BJ (cell line): ENCODE measurements at regions of chr16 and their contacts with region 1.

Region 1: DNA sequence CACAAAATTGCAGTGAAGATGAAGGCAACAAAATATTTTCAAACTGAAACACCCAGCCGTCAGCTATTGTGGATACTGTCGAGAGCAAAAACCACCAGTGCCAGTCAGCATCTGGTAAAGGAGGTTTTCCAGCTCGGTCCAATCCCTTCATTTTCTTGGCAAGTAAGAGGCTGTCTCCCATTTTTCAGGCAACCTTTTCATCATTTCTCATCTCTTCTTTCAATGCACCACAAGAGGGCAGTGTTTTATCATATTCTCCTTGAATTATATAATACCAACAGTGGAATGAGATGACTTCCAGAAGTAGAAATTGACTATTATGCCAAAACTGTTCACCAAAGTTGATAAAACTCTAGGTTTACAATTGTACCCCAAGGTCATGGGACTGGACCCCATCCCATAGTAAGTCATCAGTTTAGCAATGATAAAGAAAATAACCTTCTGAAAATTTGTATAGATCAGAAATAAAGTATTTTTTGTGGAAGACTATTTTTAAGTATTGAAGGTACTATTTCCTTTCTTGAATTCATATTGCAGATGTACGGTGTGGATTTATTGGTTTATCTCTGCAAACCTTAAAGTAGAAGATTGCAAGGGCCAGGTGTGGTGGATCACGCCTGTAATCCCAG is 16.8 kb downstream of the NQO1 start:
- DNase-seq: peak; percentile 25
- H3K4me3 ChIP-seq: no peak overlapping the region
- H3K27me3 ChIP-seq: no peaks in the 10 kb centered on the region
- CTCF ChIP-seq: peak; percentile 53

Region 2: DNA sequence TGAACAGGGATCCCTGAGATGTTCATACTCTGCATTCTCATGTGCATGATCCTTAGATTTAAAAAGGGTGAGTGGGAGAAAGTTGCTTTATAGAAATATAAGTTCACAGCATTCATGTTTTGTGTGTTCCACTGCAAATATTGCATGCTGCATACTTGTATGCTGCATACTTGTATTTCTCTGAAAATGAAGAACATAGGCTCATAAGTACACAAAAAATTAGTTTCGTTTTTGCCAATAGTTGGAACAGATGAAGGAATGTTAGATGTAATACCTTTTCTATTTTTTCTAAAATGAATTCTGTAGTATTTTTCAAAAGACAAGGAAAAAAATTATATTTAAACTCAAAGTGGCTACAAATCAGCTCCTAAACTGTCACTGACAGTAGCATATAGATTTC is 64.8 kb before region 1 on chr16:
- CTCF ChIA-PET with region 1: no interaction called
- POLR2A ChIA-PET with region 1: no interaction called
- DNase-seq: no peak
- H3K4me3 ChIP-seq: no peak overlapping the region
- H3K27me3 ChIP-seq: no peaks in the 10 kb centered on the region
- CTCF ChIP-seq: no peak

Region 3: DNA sequence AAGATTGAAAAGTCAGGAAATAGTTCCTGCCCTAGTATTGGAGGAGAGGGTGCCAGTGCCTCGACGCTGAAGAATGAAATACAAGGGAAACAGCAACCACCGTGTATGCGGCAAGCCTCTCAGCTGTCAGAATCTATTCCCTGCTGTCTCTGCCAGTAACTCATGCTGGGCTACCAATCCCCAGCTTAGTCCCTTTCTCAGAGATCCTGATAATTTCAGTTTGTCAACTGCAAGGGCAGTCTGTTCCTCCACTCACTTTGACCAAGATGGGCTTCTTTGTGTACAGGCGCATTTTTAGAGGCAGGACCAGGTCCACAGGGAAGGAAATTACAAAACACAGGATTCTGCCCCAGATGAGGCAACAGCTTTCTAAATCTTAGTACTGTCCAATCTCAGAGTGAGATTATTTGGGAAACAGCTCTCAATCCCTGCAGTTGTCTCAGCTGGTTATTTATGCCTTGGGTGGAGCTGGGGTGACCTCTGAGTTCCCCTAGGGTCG is 15.5 kb after region 1 on chr16:
- CTCF ChIA-PET with region 1: interaction called, 11 read pairs
- POLR2A ChIA-PET with region 1: no interaction called
- DNase-seq: no peak
- H3K4me3 ChIP-seq: peak overlapping the region; percentile 51
- H3K27me3 ChIP-seq: no peaks in the 10 kb centered on the region
- CTCF ChIP-seq: no peak

Region 4: GRCh38 chr16:69787883-69788282 is 78.3 kb after region 1 on chr16:
- CTCF ChIA-PET with region 1: no interaction called
- POLR2A ChIA-PET with region 1: no interaction called
- DNase-seq: no peak
- H3K4me3 ChIP-seq: no peak overlapping the region
- H3K27me3 ChIP-seq: no peaks in the 10 kb centered on the region
- CTCF ChIP-seq: no peak

Region 5: GRCh38 chr16:69848637-69849545 is 139.3 kb after region 1 on chr16:
- CTCF ChIA-PET with region 1: no interaction called
- POLR2A ChIA-PET with region 1: no interaction called
- DNase-seq: peak; percentile 76
- H3K4me3 ChIP-seq: peak overlapping the region; percentile 4; the same call in 1 of the 2 replicates
- H3K27me3 ChIP-seq: no peaks in the 10 kb centered on the region
- CTCF ChIP-seq: peak; percentile 28; the same call in 1 of the 2 replicates

Region 6: DNA sequence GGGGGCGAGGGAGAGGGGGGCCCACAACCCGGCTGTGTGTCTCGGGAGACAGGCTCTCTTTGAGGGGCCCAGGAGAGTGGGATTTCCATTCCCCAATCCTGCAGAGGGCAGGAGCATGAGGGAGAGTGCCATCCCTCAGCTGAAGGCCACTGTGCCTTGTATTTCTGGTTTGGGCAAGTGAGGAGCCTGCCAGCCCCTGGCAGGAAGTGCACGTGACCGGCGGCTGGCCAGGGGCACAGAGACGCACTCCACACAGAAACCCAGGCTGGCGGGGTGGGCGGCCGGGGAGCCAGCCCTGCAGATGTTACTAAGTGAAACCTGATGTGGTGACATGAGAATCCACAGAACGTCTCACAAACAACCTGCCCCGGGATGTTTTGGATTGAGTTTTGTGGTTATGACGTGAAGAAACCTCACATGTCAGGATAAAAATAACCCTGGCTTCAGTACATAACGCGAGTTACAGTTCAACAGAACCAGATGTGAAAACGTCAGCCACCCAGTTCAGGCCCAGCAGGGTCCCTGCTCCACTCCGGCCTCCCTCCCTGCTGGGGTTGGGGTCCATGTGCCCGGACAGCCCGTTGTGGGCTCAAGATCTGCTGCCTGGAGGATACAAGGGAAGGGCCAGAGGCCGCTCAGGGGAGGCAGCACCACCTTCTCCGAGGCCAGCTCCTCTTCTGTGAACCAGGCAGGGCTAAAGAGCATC is 1028.0 kb after region 1 on chr16:
- CTCF ChIA-PET with region 1: no interaction called
- POLR2A ChIA-PET with region 1: no interaction called
- DNase-seq: peak; percentile 97
- H3K4me3 ChIP-seq: no peak overlapping the region
- H3K27me3 ChIP-seq: no peaks in the 10 kb centered on the region
- CTCF ChIP-seq: no peak